Dendritic cell treated with granulocyte-macrophage colony-stimulating factor and Interleukin-4, amounts not matched to agents 40 ng/mL and 50 ng/mL, for 4 days (primary cell): ENCODE measurements at regions of chr7 and their contacts with region 1.

Region 1: GRCh38 chr7:73436031-73436828 is 2.7 kb downstream of the FZD9 start:
- H3K4me3 Mint-ChIP-seq: no peak overlapping the region
- H3K27ac Mint-ChIP-seq: no peak overlapping the region
- H3K4me1 Mint-ChIP-seq: peaks cover 5% of the 10 kb centered on the region
- H3K27me3 Mint-ChIP-seq: peaks cover 29% of the 10 kb centered on the region

Region 2: DNA sequence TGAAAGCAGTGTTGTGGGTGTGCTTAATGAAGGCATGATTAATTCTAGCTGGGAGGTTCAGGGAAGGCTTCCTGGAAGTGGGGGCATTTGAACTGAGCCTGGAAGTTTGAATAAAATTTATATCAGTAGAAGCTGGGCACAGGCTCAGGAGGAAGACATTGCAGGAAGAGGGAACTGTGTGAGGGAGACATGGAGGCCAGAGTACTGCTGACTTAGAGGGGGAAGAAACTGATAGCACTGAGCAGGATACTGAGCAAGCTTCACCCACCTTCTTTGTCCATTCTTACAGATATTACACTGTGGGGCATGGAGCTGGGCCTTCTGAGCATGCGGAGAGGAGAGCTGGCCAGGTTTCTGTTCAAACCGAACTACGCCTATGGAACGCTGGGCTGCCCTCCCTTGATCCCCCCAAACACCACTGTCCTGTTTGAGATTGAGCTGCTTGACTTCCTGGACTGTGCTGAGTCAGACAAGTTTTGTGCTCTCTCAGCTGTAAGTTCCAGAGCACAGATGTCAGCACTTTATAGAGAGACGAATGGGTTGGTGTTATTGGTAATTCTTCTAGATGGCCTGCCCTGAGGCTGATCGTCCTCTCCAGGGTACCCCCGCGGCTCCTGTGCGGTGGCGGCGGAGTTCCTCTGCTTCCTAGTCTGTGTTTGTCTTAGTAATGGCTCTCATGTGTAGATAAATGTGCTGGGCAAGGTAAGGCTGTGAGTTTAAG is 106.2 kb before region 1 on chr7:
- intact Hi-C with region 1: loop called (anchors 5 kb)
- H3K4me3 Mint-ChIP-seq: peak overlapping the region; percentile 59
- H3K27ac Mint-ChIP-seq: peak overlapping the region; percentile 82
- H3K4me1 Mint-ChIP-seq: peaks cover 29% of the 10 kb centered on the region
- H3K27me3 Mint-ChIP-seq: peaks cover 22% of the 10 kb centered on the region

Region 3: GRCh38 chr7:73387221-73387828 is 48.9 kb before region 1 on chr7:
- intact Hi-C with region 1: no loop called
- H3K4me3 Mint-ChIP-seq: no peak overlapping the region
- H3K27ac Mint-ChIP-seq: no peak overlapping the region
- H3K4me1 Mint-ChIP-seq: peaks cover 8% of the 10 kb centered on the region
- H3K27me3 Mint-ChIP-seq: peaks cover 21% of the 10 kb centered on the region

Region 4: DNA sequence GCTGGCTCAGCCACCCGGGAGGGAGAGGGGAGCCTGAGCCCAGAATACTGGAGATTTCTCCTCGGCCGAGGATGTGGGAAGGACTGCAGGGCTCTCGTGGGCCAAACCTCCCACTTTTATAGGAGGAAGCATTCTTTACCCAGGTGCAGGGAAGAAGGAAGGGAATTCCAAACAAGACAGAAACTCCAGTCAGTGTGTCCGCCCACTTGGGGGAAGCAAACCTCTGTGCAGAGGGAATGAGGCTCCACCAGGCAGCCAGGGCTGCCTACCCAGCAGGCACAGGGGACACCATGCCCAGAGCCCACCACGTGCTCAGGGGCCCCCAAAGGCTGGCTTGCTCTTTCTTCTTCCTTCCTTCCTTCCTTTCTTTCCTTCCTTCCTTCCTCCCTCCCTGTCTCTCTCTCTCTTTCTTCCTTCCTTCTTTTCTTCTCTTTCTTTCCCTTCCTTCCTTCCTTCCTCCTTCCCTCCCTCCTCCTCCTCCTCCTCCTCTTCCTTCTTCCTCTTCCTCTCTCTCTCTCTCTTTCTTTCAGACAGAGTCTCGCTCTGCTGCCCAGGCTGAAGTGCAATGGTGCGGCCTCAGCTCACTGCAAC is 18.0 kb before region 1 on chr7:
- intact Hi-C with region 1: no loop called
- H3K4me3 Mint-ChIP-seq: no peak overlapping the region
- H3K27ac Mint-ChIP-seq: no peak overlapping the region
- H3K4me1 Mint-ChIP-seq: no peaks in the 10 kb centered on the region
- H3K27me3 Mint-ChIP-seq: peaks cover 22% of the 10 kb centered on the region

Region 5: GRCh38 chr7:73879977-73880681 is 443.9 kb after region 1 on chr7:
- intact Hi-C with region 1: no loop called
- H3K4me3 Mint-ChIP-seq: no peak overlapping the region
- H3K27ac Mint-ChIP-seq: no peak overlapping the region
- H3K4me1 Mint-ChIP-seq: no peaks in the 10 kb centered on the region
- H3K27me3 Mint-ChIP-seq: peaks cover 38% of the 10 kb centered on the region